ENCODE measurements at regions of chr4 and their contacts with region 1.

Region 1: GRCh38 chr4:83012687-83013419 is 2.2 kb upstream of the LIN54 start:
- DNase-seq: peak; percentile 99

Region 2: DNA sequence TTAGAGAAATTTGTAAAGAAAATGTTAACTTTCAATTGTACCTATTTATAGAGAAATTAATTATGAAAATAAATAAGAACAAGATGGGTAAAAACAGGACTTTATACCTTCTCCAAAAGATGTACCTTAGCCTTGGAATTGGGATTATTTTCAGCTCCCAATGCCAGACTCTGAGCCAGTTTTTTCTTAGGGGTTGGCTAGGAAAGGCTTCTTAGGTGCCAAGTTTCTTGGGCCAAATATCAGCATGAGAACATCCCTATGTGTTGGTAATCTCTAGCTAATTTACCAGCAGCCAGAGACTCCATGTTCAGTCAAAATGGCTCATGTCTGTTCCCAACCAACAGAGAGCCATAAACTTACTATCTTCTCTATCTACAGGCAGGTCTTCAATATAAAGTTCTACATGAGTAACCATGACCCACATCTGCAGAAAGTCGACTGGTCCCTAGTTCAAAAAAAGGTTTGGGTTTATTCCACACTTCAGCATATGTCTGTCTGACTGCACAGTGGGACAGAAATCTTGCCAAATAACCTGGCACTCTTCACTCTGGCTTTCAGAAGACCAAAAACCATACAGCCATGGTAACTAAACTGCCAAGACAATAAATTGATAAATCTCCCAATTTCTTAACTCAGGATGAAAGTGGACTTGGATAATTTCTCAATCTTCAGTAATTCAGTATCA is 1160.7 kb before region 1 on chr4:
- intact Hi-C with region 1: no loop called
- DNase-seq: no peak

Region 3: DNA sequence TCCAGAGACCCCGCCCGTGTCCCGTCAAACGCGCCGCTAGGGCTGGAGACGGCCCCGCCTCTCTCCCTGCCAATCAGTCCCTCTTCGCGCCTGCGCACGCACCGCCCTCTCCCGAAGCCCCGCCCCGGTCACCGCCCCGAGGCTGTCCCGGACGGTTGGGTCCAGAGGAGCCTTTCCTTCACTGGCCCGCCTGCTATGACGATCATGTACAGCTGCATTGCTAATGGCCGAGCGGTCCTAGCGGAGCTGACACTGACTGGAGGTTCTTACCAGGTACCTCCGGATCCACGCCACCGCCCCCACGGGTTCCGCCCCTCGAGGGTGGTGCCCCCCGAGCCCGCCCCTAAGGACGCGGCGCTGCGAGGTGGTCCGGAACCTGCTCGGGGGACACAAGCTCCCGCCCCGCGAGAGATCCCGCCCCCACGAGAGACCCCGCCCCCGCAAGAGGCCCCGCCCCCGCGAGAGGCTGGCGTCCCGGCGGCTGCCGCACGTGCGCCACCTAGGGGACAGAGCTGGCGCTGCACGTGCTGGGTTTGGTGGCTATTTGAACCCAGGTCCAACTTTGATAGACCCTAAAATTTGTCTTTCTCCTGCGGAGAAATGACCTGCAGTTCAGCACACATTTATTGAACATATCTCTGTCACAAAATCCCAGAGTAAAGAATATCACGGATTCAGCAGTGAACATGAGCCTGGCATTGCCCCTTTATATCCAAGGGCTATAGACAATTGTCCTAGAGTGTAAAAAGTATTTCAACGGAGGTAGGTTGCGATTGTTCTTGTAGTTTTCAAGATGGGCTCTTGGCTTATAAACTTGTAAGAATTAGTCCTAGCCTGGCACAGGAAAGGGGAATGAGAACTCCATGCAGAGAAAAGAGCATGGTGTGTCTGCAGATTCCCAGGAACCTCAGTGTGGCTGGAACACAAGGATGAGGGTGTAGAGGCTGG is 727.7 kb before region 1 on chr4:
- intact Hi-C with region 1: loop called (anchors 10 kb)
- DNase-seq: peak; percentile 100

Region 4: DNA sequence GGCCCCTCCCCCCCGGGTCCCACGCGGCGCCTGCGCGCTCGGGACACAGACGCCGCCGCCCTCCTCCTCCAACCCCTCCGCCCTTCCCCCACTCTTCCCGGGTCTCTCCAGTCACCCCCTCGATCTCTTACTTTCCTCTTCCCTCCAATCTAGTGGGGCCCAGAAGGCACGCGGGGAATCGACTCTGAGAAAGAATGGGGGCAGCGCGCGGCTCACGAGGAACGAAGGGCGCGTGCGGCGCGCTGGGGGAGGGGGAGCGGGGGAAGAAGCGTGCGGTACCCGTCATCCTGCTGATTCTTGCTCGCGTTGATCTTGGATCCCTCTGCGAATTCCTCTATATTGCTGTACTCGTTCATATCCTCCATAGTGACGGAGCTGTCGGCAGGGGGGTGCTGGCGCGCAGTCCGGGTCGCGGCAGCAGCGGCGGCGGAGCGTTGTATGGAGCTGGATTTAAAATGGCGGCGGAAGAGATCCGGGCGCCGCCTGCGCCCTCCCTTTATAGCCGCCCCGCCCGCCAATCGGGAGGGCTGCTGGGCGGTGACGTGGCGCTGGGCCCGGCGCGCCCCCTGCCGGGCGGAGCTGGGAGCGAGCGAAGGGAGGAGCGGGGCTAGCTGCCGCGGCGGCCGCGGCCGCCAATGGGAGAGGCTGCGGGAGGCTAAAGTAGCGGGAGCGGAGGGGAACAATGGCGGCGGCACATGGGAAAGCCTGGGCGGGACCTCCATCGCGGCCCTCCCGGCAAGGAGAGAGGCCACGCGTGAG is 583.7 kb before region 1 on chr4:
- intact Hi-C with region 1: loop called (anchors 5 kb)
- DNase-seq: peak; percentile 97

Region 5: GRCh38 chr4:82865592-82865991 is 147.3 kb before region 1 on chr4:
- intact Hi-C with region 1: no loop called
- DNase-seq: no peak

Region 6: DNA sequence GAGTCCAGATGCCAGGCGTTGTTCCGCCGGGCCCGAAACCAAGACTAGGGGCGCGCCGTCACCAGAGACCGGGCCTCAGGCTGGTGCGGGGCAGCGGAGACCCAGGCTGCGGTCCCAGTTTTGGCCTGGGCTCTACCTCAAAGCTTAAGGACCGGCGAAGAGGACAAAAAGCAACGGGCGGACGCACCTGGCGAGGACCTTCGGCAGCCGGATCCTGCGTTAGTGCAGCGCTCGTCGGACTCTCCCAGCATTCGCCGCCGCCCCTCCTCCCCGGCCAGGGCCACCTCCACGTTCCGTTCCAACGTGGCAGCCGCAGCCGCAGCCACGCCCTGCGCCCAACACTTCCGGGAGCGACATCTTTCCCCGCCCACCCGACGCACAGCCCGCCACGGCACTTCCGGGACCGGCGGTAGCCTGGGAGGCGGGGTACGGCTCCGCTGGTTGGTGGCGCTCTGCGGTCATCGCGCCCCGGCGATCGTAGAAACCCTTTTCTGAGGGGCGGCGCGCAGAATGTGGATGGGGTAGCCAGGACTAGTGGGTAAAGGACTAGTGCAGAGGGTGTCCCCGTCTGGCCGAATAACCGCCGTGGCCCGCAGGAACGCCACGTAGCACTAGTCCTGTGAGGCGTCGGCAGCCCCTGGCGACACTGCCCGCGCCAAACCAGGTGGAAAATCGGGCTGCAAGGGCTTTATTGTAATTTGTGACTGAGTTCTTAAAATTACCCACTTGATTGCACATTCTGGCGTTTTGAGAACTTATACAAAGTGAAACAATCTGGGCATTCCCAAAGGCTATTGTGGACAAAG is 121.7 kb before region 1 on chr4 and contains the start of gene SEC31A:
- intact Hi-C with region 1: loop called (anchors 2 kb)
- DNase-seq: peak; percentile 99
- total RNA-seq, gene SEC31A: 140 TPM

Region 7: GRCh38 chr4:82900331-82901128 is 112.3 kb before region 1 on chr4 and contains the start of gene THAP9:
- intact Hi-C with region 1: loop called (anchors 1 kb)
- DNase-seq: peak; percentile 100
- total RNA-seq, gene THAP9: 6.0 TPM

Region 8: GRCh38 chr4:83034630-83035494 is 22.0 kb after region 1 on chr4 and contains the start of gene COPS4:
- intact Hi-C with region 1: loop called (anchors 1 kb)
- DNase-seq: peak; percentile 98
- total RNA-seq, gene COPS4: 47.1 TPM

Region 9: GRCh38 chr4:83297548-83298260 is 284.9 kb after region 1 on chr4:
- intact Hi-C with region 1: no loop called
- DNase-seq: no peak

Measured in cardiac septum (tissue), 1 donor.